Activated T-helper 1 cell treated with anti-CD3 and anti-CD28 coated beads, Interleukin-12 subunit alpha, Interleukin-12 subunit beta, Interleukin-2, Interleukin-4 antibody, amounts not matched to agents 30 ng/mL and 10 ng/mL and 1 ng/mL, durations not matched to agents 14 hours and 24 hours and 36 hours (primary cell): ENCODE measurements at regions of chr2 and their contacts with region 1.

Region 1: GRCh38 chr2:180980106-180980942 is at the start of gene UBE2E3:
- DNase-seq: peak; percentile 72
- H3K4me3 Mint-ChIP-seq: peak within 1 kb of the TSS; percentile 98
- H3K27ac Mint-ChIP-seq: peak within 1 kb of the TSS; percentile 95
- H3K4me1 Mint-ChIP-seq: peaks cover 45% of the 10 kb centered on the region
- H3K27me3 Mint-ChIP-seq: peaks cover 30% of the 10 kb centered on the region
- total RNA-seq, gene UBE2E3: 49.8 and 57.4 TPM in 2 replicates

Region 2: GRCh38 chr2:180006781-180007579 is 973.3 kb before region 1 on chr2 and contains the start of gene CWC22:
- intact Hi-C with region 1: loop called (anchors 2 kb)
- DNase-seq: peak; percentile 79
- H3K4me3 Mint-ChIP-seq: peak within 1 kb of the TSS; percentile 94
- H3K27ac Mint-ChIP-seq: peak within 1 kb of the TSS; percentile 97
- H3K4me1 Mint-ChIP-seq: peaks cover 26% of the 10 kb centered on the region
- H3K27me3 Mint-ChIP-seq: no peaks in the 10 kb centered on the region
- total RNA-seq, gene CWC22: 29.6 and 30.9 TPM in 2 replicates

Region 3: DNA sequence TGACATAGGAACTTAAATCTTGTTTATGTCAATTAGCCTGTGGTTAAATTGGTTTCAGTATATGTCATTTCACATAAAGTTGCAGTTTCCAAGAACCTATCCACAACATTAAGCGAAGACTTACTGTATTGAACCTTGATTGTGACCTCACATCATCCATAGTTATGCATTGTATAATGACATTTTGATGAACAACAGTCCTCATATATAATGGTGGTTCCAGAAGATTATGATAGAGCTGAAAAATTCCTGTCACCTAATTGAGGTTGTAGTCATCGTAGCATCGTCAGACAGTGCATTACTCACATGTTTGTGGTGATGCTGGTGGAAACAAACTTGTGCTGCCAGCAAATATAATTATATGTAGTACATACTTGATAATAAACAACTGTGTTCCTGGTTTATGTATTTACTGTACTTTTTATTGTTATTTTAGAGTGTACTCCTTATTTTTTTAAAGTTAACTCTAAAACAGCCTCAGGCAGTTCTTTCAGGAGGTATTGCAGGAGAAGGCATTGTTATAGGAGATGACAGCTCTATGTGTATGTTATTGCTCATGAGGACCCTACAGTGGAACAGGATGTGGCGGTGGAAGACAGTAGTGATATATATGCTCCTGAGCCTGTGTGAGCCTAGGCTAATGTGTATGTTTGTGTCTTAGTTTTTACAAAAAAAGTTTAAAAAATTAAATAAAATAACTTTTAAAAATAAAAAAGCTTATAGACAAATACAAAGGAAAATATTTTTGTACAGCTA is 56.7 kb after region 1 on chr2:
- intact Hi-C with region 1: loop called (anchors 1 kb)
- DNase-seq: no peak
- H3K4me3 Mint-ChIP-seq: no peak overlapping the region
- H3K27ac Mint-ChIP-seq: peak overlapping the region; percentile 79
- H3K4me1 Mint-ChIP-seq: peaks cover 36% of the 10 kb centered on the region
- H3K27me3 Mint-ChIP-seq: no peaks in the 10 kb centered on the region

Region 4: DNA sequence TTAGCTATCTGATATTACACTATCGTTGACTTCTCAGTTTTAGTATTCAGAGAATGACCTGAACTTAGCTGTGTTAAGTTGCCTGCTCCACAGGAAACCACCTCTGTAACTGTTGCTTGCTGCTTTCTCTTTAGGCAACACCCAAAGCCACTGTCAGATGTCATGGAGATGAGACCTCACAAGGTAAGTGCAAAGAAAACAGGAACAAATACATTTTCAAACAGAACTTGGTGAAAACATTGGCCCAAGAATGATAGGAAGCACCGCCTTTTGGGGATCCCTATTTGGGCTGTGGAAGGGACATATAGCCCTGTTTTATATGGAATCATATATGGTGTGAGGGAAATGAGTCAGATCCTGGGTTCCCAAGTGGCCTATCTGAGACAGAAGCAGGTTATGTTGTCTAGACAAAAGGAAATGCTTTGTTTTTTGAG is 143.5 kb after region 1 on chr2:
- intact Hi-C with region 1: loop called (anchors 1 kb)
- DNase-seq: peak; percentile 73
- H3K4me3 Mint-ChIP-seq: peak overlapping the region; percentile 78
- H3K27ac Mint-ChIP-seq: peak overlapping the region; percentile 95
- H3K4me1 Mint-ChIP-seq: peaks cover 74% of the 10 kb centered on the region
- H3K27me3 Mint-ChIP-seq: no peaks in the 10 kb centered on the region

Region 5: GRCh38 chr2:181457121-181457740 is 476.9 kb after region 1 on chr2 and contains the start of gene ITGA4:
- intact Hi-C with region 1: loop called (anchors 1 kb)
- DNase-seq: peak; percentile 85
- H3K4me3 Mint-ChIP-seq: peak within 1 kb of the TSS; percentile 98
- H3K27ac Mint-ChIP-seq: peak within 1 kb of the TSS; percentile 96
- H3K4me1 Mint-ChIP-seq: peaks cover 75% of the 10 kb centered on the region
- H3K27me3 Mint-ChIP-seq: no peaks in the 10 kb centered on the region
- total RNA-seq, gene ITGA4: 98.5 and 118 TPM in 2 replicates

Region 6: DNA sequence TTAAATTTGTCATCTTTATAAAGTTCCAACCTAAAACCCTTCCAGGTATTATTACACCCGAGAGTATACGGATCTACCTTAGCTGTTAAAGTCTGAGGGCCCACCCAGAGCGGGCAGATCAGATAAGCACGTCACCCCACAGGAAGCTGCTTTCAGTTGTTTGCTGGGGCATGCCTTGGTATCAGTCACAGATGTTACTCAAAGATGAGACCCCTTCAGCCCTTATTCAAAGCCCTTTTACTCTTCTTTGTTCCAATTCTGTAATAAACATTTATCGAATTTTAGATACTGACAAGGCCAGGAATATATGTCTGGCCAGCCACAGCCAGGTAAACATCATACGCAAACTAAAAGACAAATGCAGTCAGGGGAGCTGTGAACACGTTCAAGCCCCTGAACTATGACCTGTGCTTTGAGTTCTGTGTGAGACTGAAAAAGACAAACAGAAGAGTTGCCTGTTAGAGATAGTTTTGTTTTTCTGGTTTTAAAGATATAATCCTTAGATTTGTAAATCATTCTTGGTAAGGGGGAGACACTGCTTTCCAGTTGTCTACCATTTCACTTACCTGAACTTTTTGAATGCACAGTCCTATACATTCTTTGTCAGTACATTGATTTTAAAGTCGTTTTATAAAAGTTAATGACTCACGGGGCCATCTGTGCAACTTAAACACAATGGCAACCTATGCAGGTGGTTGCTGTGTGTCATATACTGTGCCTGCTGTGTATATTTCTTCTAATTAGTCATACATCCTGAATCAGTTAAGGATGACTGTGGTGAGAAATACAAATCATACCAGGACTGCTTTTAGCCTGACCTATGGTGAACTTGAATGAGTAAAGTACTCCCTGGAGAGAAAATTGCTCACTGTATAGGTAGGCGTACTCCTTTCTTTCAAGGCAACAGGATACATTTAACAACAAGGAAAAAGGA is 810.7 kb after region 1 on chr2:
- intact Hi-C with region 1: loop called (anchors 10 kb)
- DNase-seq: peak; percentile 3
- H3K4me3 Mint-ChIP-seq: no peak overlapping the region
- H3K27ac Mint-ChIP-seq: peak overlapping the region; percentile 38
- H3K4me1 Mint-ChIP-seq: peaks cover 33% of the 10 kb centered on the region
- H3K27me3 Mint-ChIP-seq: no peaks in the 10 kb centered on the region

Region 7: DNA sequence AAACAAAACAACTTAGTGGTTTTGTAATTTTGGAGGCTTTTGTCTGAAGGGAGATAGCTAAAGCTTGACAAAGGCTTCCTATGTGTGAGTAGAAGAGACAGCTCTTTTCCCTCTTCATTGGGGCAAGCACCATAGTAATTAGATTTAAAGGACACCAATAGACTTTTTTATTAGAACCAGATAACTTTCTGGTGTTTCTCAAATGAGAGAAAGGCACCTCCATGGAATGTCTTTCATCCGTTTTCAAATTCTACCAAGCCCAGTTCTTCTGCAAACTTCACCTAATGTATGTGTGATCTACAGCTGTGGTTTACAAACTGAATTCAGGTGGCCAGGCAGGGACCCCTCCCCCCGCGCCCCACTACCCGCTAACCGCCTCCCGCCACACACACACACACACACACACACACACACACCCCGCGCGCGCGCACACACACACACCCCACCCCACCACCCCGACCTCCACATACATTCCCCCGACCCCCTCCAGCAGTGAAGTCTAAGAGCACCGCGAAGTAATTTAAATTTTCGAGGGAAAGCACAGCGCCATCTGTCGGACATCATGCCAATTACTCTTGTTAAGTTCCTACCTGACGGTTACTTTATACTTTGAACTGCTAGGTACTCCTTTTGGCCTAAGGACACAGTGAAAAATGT is 973.7 kb after region 1 on chr2:
- intact Hi-C with region 1: loop called (anchors 5 kb)
- DNase-seq: peak; percentile 38
- H3K4me3 Mint-ChIP-seq: peak overlapping the region; percentile 47
- H3K27ac Mint-ChIP-seq: no peak overlapping the region
- H3K4me1 Mint-ChIP-seq: peaks cover 21% of the 10 kb centered on the region
- H3K27me3 Mint-ChIP-seq: peaks cover 24% of the 10 kb centered on the region